Ovary (tissue), 10 donors: ENCODE measurements at regions of chr2 and their contacts with region 1.

Region 1: GRCh38 chr2:200578778-200579177 is 7.0 kb upstream of the AOX1 start:
- DNase-seq: peak in 1 of 5 donors; percentile 28
- H3K4me3 ChIP-seq: no peak overlapping the region
- H3K27ac ChIP-seq: no peak overlapping the region
- H3K4me1 ChIP-seq: no peaks in the 10 kb centered on the region
- H3K27me3 ChIP-seq: no peaks in the 10 kb centered on the region
- CTCF ChIP-seq: peak; percentile 24 to 71 (median 57)
- EP300 ChIP-seq: no peak
- POLR2A ChIP-seq: no peak

Region 2: GRCh38 chr2:199875400-199875799 is 703.4 kb before region 1 on chr2:
- intact Hi-C with region 1: no loop called
- DNase-seq: no peak
- H3K4me3 ChIP-seq: no peak overlapping the region
- H3K27ac ChIP-seq: no peak overlapping the region
- H3K4me1 ChIP-seq: no peaks in the 10 kb centered on the region
- H3K27me3 ChIP-seq: no peaks in the 10 kb centered on the region
- CTCF ChIP-seq: no peak
- EP300 ChIP-seq: no peak
- POLR2A ChIP-seq: no peak

Region 3: DNA sequence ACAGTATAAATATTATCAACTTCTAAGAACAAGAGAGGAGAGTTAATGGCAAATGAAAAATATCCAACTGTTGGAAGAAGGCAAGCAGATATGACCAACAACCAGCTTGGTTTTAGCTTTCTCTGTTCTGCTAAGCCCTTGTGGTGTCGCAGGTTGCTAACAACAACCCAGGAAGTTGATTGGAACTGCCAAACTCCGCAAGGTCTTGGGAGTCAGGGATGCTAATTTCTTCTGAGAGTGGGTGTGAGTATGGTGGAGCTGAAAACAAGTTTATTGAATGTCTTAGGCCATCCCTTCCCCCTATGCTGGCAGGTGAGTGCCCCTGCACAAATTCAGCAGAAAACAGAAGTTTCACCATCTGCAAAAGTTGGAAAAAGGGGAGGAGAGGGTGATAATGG is 250.5 kb after region 1 on chr2:
- intact Hi-C with region 1: loop called in 1 of 4 experiments (anchors 5 kb)
- DNase-seq: no peak
- H3K4me3 ChIP-seq: no peak overlapping the region
- H3K27ac ChIP-seq: peak overlapping the region in 1 of 2 donors; percentile 60
- H3K4me1 ChIP-seq: peaks cover 18% of the 10 kb centered on the region
- H3K27me3 ChIP-seq: no peaks in the 10 kb centered on the region
- CTCF ChIP-seq: no peak
- EP300 ChIP-seq: no peak
- POLR2A ChIP-seq: no peak